ENCODE measurements at regions of chr20 and their contacts with region 1.

Region 1: GRCh38 chr20:10603971-10604864 is 69.6 kb downstream of the JAG1 start:
- DNase-seq: no peak
- H3K4me3 Mint-ChIP-seq: no peak overlapping the region
- H3K27ac Mint-ChIP-seq: peak overlapping the region; percentile 59
- H3K4me1 Mint-ChIP-seq: peaks cover 33% of the 10 kb centered on the region
- H3K27me3 Mint-ChIP-seq: no peaks in the 10 kb centered on the region

Region 2: GRCh38 chr20:10093087-10093591 is 511.1 kb before region 1 on chr20:
- intact Hi-C with region 1: no loop called
- DNase-seq: no peak
- H3K4me3 Mint-ChIP-seq: no peak overlapping the region
- H3K27ac Mint-ChIP-seq: no peak overlapping the region
- H3K4me1 Mint-ChIP-seq: no peaks in the 10 kb centered on the region
- H3K27me3 Mint-ChIP-seq: no peaks in the 10 kb centered on the region

Region 3: GRCh38 chr20:10219452-10219791 is 384.8 kb before region 1 on chr20:
- intact Hi-C with region 1: loop called (anchors 1 kb)
- DNase-seq: peak; percentile 69
- H3K4me3 Mint-ChIP-seq: peak overlapping the region; percentile 79
- H3K27ac Mint-ChIP-seq: no peak overlapping the region
- H3K4me1 Mint-ChIP-seq: peaks cover 33% of the 10 kb centered on the region
- H3K27me3 Mint-ChIP-seq: peaks cover 5% of the 10 kb centered on the region

Region 4: GRCh38 chr20:10434832-10435812 is 169.1 kb before region 1 on chr20 and contains the start of gene SLX4IP:
- intact Hi-C with region 1: loop called (anchors 2 kb)
- DNase-seq: peak; percentile 78
- H3K4me3 Mint-ChIP-seq: peak within 1 kb of the TSS; percentile 97
- H3K27ac Mint-ChIP-seq: peak within 1 kb of the TSS; percentile 97
- H3K4me1 Mint-ChIP-seq: peaks cover 59% of the 10 kb centered on the region
- H3K27me3 Mint-ChIP-seq: no peaks in the 10 kb centered on the region
- total RNA-seq, gene SLX4IP: 6.3 and 6.4 TPM in 2 replicates

Region 5: GRCh38 chr20:10521068-10521831 is 83.0 kb before region 1 on chr20:
- intact Hi-C with region 1: loop called (anchors 2 kb)
- DNase-seq: no peak
- H3K4me3 Mint-ChIP-seq: peak overlapping the region; percentile 14
- H3K27ac Mint-ChIP-seq: peak overlapping the region; percentile 56
- H3K4me1 Mint-ChIP-seq: peaks cover 44% of the 10 kb centered on the region
- H3K27me3 Mint-ChIP-seq: no peaks in the 10 kb centered on the region

Region 6: DNA sequence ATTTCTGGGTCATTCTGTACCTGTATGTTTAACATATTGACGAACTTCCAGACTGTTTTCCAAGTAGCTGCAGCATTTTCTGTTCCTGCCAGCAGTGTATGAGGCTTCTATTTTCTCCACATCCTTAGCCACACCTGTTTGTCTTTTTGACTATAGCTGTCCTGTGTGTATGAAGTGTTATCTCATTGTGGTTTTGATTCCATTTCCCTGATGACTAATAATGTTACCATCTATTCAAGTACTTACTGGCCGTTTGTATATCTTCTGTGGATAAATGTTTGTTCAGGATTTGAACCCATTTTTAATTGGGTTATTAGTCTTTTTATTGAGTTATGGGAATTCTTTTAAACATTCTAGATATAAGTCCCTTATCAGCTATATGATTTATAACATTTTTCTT is 25.6 kb before region 1 on chr20:
- intact Hi-C with region 1: loop called (anchors 2 kb)
- DNase-seq: no peak
- H3K4me3 Mint-ChIP-seq: no peak overlapping the region
- H3K27ac Mint-ChIP-seq: no peak overlapping the region
- H3K4me1 Mint-ChIP-seq: peaks cover 15% of the 10 kb centered on the region
- H3K27me3 Mint-ChIP-seq: no peaks in the 10 kb centered on the region

Region 7: GRCh38 chr20:10636326-10636818 is 32.2 kb after region 1 on chr20:
- intact Hi-C with region 1: no loop called
- DNase-seq: no peak
- H3K4me3 Mint-ChIP-seq: no peak overlapping the region
- H3K27ac Mint-ChIP-seq: no peak overlapping the region
- H3K4me1 Mint-ChIP-seq: no peaks in the 10 kb centered on the region
- H3K27me3 Mint-ChIP-seq: no peaks in the 10 kb centered on the region

Region 8: GRCh38 chr20:10673988-10674711 is 69.9 kb after region 1 on chr20 and contains the start of gene JAG1:
- intact Hi-C with region 1: loop called (anchors 1 kb)
- DNase-seq: peak; percentile 78
- H3K4me3 Mint-ChIP-seq: peak within 1 kb of the TSS; percentile 92
- H3K27ac Mint-ChIP-seq: peak within 1 kb of the TSS; percentile 87
- H3K4me1 Mint-ChIP-seq: peaks cover 30% of the 10 kb centered on the region
- H3K27me3 Mint-ChIP-seq: peaks cover 68% of the 10 kb centered on the region
- total RNA-seq, gene JAG1: 2.8 and 3.1 TPM in 2 replicates

Measured in activated T-helper 2 cell treated with anti-CD3 and anti-CD28 coated beads, Interferon-gamma antibody, Interleukin-2, Interleukin-4, amounts not matched to agents 10 μg/mL and 5 μg/mL and 100 μg/mL, durations not matched to agents 14 hours and 24 hours and 36 hours (primary cell).